ENCODE measurements at regions of chr10 and their contacts with region 1.

Region 1: DNA sequence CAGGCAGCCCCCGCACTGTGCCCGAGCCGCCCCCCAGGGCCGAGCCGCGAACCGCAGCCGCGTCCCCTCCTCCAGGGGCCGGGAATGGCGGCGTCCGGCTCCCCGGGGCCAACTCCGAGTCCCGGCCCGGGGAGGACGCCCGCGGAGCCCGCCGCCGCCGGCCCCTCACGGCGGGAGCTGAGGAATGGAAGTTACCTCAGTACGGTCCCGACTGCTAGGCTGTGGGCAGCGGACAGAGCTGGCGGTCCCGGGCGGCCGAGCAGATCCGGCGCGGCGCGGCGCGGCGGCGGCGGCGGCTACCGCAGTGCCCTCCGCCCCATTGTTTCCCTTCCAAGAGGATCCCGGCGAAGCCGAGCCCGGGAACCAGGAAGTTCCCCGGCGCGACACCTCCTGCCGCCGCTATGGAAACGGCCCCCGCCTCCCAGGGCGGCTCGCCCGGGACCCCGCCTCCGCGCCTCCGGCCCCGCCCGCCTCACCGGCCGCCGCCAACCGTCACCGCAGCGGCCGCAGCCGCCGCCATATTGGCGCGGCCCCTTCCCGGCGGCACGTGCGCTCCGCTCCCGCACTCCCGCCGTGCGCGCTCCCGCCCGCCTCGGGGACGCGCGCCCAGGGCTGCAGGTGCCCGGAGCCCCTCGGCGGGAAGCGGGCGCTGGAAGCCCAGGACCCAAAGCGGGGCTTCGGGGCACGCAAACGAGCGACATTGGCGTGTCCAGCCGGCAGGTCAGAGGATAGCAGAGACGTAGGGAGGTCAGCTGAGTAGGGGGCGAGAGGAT is at the start of gene USP6NL:
- DNase-seq: peak; percentile 44 to 75 (median 59)
- ATAC-seq: peak; percentile 84
- H3K4me3 ChIP-seq: peak within 1 kb of the TSS; percentile 70
- H3K4me3 Mint-ChIP-seq: peak within 1 kb of the TSS; percentile 86 to 98 (median 94)
- H3K27ac ChIP-seq: peak within 1 kb of the TSS; percentile 69
- H3K27ac Mint-ChIP-seq: peak within 1 kb of the TSS; percentile 62 to 97 (median 94)
- H3K4me1 ChIP-seq: peaks cover 0 to 9% of the 10 kb centered on the region in 2 donors
- H3K4me1 Mint-ChIP-seq: peaks cover 24 to 60% (median 50%) of the 10 kb centered on the region in 7 donors
- H3K27me3 ChIP-seq: no peaks in the 10 kb centered on the region
- H3K27me3 Mint-ChIP-seq: peaks cover 0 to 62% (median 0%) of the 10 kb centered on the region in 5 donors
- total RNA-seq, gene USP6NL: 0.70 to 6.6 (median 5.0) TPM

Region 2: GRCh38 chr10:11527691-11528255 is 83.7 kb before region 1 on chr10:
- CTCF ChIA-PET with region 1: no interaction called
- POLR2A ChIA-PET with region 1: no interaction called
- intact Hi-C with region 1: loop called in 1 of 2 experiments (anchors 2 kb)
- DNase-seq: peak in 1 of 9 donors; percentile 18
- ATAC-seq: no peak
- H3K4me3 ChIP-seq: peak overlapping the region; percentile 25
- H3K4me3 Mint-ChIP-seq: peak overlapping the region in 9 of 10 donors; percentile 6 to 78 (median 66)
- H3K27ac ChIP-seq: no peak overlapping the region
- H3K27ac Mint-ChIP-seq: peak overlapping the region in 5 of 9 donors; percentile 4 to 62 (median 49)
- H3K4me1 ChIP-seq: no peaks in the 10 kb centered on the region
- H3K4me1 Mint-ChIP-seq: peaks cover 12 to 28% (median 22%) of the 10 kb centered on the region in 7 donors
- H3K27me3 ChIP-seq: no peaks in the 10 kb centered on the region
- H3K27me3 Mint-ChIP-seq: peaks cover 0 to 8% (median 0%) of the 10 kb centered on the region in 5 donors

Region 3: GRCh38 chr10:11595395-11595692 is 16.1 kb before region 1 on chr10:
- CTCF ChIA-PET with region 1: interaction called, 3 read pairs
- POLR2A ChIA-PET with region 1: interaction called, 3 read pairs
- intact Hi-C with region 1: loop called in 1 of 2 experiments (anchors 2 kb)
- DNase-seq: no peak
- ATAC-seq: no peak
- H3K4me3 ChIP-seq: no peak overlapping the region
- H3K4me3 Mint-ChIP-seq: no peak overlapping the region
- H3K27ac ChIP-seq: no peak overlapping the region
- H3K27ac Mint-ChIP-seq: peak overlapping the region in 1 of 9 donors; percentile 70
- H3K4me1 ChIP-seq: no peaks in the 10 kb centered on the region
- H3K4me1 Mint-ChIP-seq: peaks cover 0 to 17% (median 8%) of the 10 kb centered on the region in 7 donors
- H3K27me3 ChIP-seq: no peaks in the 10 kb centered on the region
- H3K27me3 Mint-ChIP-seq: peaks cover 0 to 23% (median 0%) of the 10 kb centered on the region in 5 donors

Region 4: GRCh38 chr10:11631890-11632587 is 20.6 kb after region 1 on chr10:
- CTCF ChIA-PET with region 1: interaction called, 6 read pairs
- POLR2A ChIA-PET with region 1: interaction called, 3 read pairs
- intact Hi-C with region 1: loop called in 1 of 2 experiments (anchors 2 kb)
- DNase-seq: peak in 7 of 9 donors; percentile 22 to 52 (median 37)
- ATAC-seq: peak; percentile 81
- H3K4me3 ChIP-seq: peak overlapping the region; percentile 9
- H3K4me3 Mint-ChIP-seq: peak overlapping the region; percentile 2 to 85 (median 62)
- H3K27ac ChIP-seq: no peak overlapping the region
- H3K27ac Mint-ChIP-seq: peak overlapping the region in 7 of 9 donors; percentile 64 to 80 (median 72)
- H3K4me1 ChIP-seq: peaks cover 0 to 7% of the 10 kb centered on the region in 2 donors
- H3K4me1 Mint-ChIP-seq: peaks cover 0 to 23% (median 17%) of the 10 kb centered on the region in 7 donors
- H3K27me3 ChIP-seq: no peaks in the 10 kb centered on the region
- H3K27me3 Mint-ChIP-seq: peaks cover 0 to 57% (median 0%) of the 10 kb centered on the region in 5 donors

Measured in naive thymus-derived CD4-positive, alpha-beta T cell (primary cell).